ENCODE measurements at regions of chr19 and their contacts with region 1.

Region 1: GRCh38 chr19:49148784-49149651 is 6.2 kb downstream of the HRC start:
- DNase-seq: peak; percentile 93
- ATAC-seq: peak; percentile 53
- H3K4me3 Mint-ChIP-seq: peak overlapping the region; percentile 67
- H3K27ac Mint-ChIP-seq: no peak overlapping the region
- H3K4me1 Mint-ChIP-seq: peaks cover 28% of the 10 kb centered on the region
- H3K27me3 Mint-ChIP-seq: peaks cover 58% of the 10 kb centered on the region

Region 2: GRCh38 chr19:48452289-48453190 is 696.5 kb before region 1 on chr19:
- CTCF ChIA-PET with region 1: no interaction called
- POLR2A ChIA-PET with region 1: no interaction called
- intact Hi-C with region 1: no loop called
- DNase-seq: no peak
- ATAC-seq: no peak
- H3K4me3 Mint-ChIP-seq: no peak overlapping the region
- H3K27ac Mint-ChIP-seq: no peak overlapping the region
- H3K4me1 Mint-ChIP-seq: peaks cover 12% of the 10 kb centered on the region
- H3K27me3 Mint-ChIP-seq: no peaks in the 10 kb centered on the region

Region 3: DNA sequence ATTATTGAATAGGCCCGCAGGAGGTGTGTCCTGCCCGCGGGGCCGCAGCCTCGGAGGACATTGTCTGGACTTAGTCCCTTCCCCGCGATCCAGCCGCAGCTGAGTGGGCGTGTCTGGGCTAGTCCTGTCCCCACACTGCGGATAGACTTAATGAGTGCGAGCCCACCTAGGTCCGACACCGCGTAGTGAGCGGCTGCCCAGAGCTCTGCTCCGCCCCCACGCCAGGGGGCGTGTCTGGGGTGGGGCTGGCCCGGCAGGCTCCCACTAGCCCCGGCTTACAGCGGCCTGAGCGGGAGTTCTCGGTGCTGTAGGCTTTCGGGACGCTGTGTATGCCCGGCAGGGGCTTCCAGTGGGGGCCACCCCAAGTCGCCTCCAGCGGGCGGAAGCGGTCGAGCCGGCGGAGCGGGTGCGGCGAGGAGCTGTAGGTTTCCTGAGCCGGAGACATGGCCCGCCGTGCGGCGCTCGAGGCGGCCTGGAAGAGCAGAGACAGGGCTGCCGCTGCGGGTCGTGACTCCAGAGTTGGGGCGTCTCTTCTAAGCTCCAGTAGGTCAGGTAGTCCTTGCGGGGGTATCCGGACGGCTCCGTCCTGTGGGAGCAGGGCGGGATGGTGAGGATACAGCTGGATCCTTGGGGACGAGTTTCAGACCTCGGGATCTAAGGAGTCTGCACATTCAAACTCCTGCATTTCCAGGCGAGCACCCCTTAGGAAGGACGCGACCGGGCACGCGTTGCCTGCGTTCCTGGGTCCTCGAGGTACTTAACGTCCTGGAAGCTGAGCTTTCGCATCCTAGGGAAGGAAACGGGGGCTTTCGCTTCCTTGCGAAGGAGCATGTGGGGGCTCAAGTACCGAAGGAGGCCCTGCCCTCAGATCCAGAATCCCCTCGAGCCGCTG is 92.8 kb before region 1 on chr19:
- CTCF ChIA-PET with region 1: interaction called, 3 read pairs
- POLR2A ChIA-PET with region 1: no interaction called
- intact Hi-C with region 1: loop called in 1 of 2 experiments (anchors 5 kb)
- DNase-seq: peak; percentile 69
- ATAC-seq: peak; percentile 68
- H3K4me3 Mint-ChIP-seq: peak overlapping the region; percentile 56
- H3K27ac Mint-ChIP-seq: no peak overlapping the region
- H3K4me1 Mint-ChIP-seq: peaks cover 20% of the 10 kb centered on the region
- H3K27me3 Mint-ChIP-seq: peaks cover 35% of the 10 kb centered on the region

Region 4: DNA sequence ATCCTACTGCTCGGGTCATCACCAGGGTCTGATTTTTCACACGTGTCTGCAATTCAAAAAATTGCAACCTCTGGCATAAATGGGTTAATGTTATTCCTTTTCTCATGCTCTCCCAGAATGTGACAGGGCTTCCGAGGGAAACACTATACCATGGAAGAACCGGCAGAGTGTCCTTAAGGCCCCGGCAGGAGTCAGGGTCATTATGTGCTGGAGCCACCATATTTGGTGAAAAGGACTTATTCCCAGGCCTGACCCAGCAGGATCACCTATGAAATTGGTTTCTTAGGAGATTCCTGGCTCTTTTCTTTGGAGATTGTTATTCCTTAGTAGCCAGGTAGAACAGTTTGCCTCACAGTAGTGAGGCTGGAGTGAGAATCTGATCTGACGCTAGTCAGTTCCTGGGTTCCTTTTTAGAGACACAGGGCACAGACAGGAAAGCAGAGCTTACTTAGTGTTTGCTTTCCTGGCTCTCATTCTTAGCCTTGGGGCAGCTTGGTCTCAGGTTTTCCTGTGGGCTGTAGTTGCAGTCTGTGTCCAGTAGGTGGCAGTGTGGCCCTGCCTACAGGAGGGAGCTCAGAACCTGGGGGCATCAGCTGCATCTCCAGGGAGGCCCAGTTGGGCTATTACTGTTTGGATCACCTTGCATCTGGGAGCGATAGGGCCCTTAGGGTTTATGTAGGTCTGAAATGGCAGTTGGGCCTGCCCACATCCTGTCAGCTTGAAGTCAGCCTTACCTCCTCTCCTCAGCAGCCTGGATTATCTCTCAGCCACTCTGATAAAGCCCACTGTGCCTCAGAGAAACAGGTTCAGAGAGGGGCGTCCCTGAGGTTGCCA is 51.3 kb before region 1 on chr19:
- CTCF ChIA-PET with region 1: interaction called, 7 read pairs
- POLR2A ChIA-PET with region 1: no interaction called
- intact Hi-C with region 1: loop called (anchors 1 kb)
- DNase-seq: peak; percentile 82
- ATAC-seq: peak; percentile 86
- H3K4me3 Mint-ChIP-seq: no peak overlapping the region
- H3K27ac Mint-ChIP-seq: no peak overlapping the region
- H3K4me1 Mint-ChIP-seq: no peaks in the 10 kb centered on the region
- H3K27me3 Mint-ChIP-seq: no peaks in the 10 kb centered on the region

Region 5: GRCh38 chr19:49127674-49128544 is 21.1 kb before region 1 on chr19:
- CTCF ChIA-PET with region 1: interaction called, 21 read pairs
- POLR2A ChIA-PET with region 1: interaction called, 3 read pairs
- intact Hi-C with region 1: loop called in 1 of 2 experiments (anchors 1 kb)
- DNase-seq: peak; percentile 98
- ATAC-seq: peak; percentile 95
- H3K4me3 Mint-ChIP-seq: peak overlapping the region; percentile 76
- H3K27ac Mint-ChIP-seq: peak overlapping the region; percentile 92
- H3K4me1 Mint-ChIP-seq: peaks cover 11% of the 10 kb centered on the region
- H3K27me3 Mint-ChIP-seq: no peaks in the 10 kb centered on the region

Region 6: DNA sequence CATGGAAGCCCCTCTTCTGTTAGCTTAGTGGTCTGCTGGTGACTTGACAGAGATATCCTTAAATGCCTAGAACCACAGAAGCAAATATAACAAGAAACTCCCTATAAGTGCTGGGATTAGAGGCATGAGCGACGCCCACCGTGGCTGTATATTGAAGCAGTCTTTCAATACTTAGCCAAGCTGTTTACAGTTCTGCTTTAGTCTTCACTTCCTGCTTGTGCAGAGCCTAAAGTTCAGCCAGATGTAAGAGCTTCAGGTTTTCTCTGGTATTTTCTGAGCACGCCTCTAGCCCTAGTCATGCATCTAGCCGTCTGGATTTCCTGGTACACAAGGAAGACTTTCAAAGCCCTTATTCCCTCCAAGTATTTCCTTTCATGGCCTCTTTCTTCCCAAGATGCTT is 37.1 kb after region 1 on chr19:
- CTCF ChIA-PET with region 1: no interaction called
- POLR2A ChIA-PET with region 1: no interaction called
- intact Hi-C with region 1: loop called in 1 of 2 experiments (anchors 5 kb)
- DNase-seq: no peak
- ATAC-seq: no peak
- H3K4me3 Mint-ChIP-seq: no peak overlapping the region
- H3K27ac Mint-ChIP-seq: no peak overlapping the region
- H3K4me1 Mint-ChIP-seq: peaks cover 7% of the 10 kb centered on the region
- H3K27me3 Mint-ChIP-seq: peaks cover 5% of the 10 kb centered on the region